ENCODE measurements at regions of chr11 and their contacts with region 1.

Region 1: GRCh38 chr11:34916015-34916842 is at the starts of genes APIP and PDHX:
- DNase-seq: peak; percentile 93
- ATAC-seq: peak; percentile 96
- H3K4me3 Mint-ChIP-seq: peak within 1 kb of the TSS; percentile 95
- H3K27ac Mint-ChIP-seq: peak within 1 kb of the TSS; percentile 91
- H3K4me1 Mint-ChIP-seq: peaks cover 27% of the 10 kb centered on the region
- H3K27me3 Mint-ChIP-seq: no peaks in the 10 kb centered on the region
- CTCF ChIP-seq: no peak
- total RNA-seq, gene APIP: 17.8 and 18.7 TPM in 2 replicates
- total RNA-seq, gene PDHX: 18.1 and 18.6 TPM in 2 replicates

Region 2: GRCh38 chr11:34105079-34105956 is 810.9 kb before region 1 on chr11 and contains the start of gene NAT10:
- CTCF ChIA-PET with region 1: no interaction called
- POLR2A ChIA-PET with region 1: interaction called, 6 read pairs
- intact Hi-C with region 1: loop called (anchors 1 kb)
- DNase-seq: peak; percentile 91
- ATAC-seq: peak; percentile 92
- H3K4me3 Mint-ChIP-seq: peak within 1 kb of the TSS; percentile 97
- H3K27ac Mint-ChIP-seq: peak within 1 kb of the TSS; percentile 98
- H3K4me1 Mint-ChIP-seq: peaks cover 41% of the 10 kb centered on the region
- H3K27me3 Mint-ChIP-seq: peaks cover 2% of the 10 kb centered on the region
- CTCF ChIP-seq: no peak
- total RNA-seq, gene NAT10: 107 and 120 TPM in 2 replicates

Region 3: GRCh38 chr11:34653826-34654490 is 262.3 kb before region 1 on chr11:
- CTCF ChIA-PET with region 1: no interaction called
- POLR2A ChIA-PET with region 1: no interaction called
- intact Hi-C with region 1: loop called (anchors 5 kb)
- DNase-seq: no peak
- ATAC-seq: peak; percentile 65
- H3K4me3 Mint-ChIP-seq: peak overlapping the region; percentile 56
- H3K27ac Mint-ChIP-seq: peak overlapping the region; percentile 80
- H3K4me1 Mint-ChIP-seq: peaks cover 54% of the 10 kb centered on the region
- H3K27me3 Mint-ChIP-seq: no peaks in the 10 kb centered on the region
- CTCF ChIP-seq: no peak

Region 4: GRCh38 chr11:34791780-34792542 is 124.3 kb before region 1 on chr11:
- CTCF ChIA-PET with region 1: no interaction called
- POLR2A ChIA-PET with region 1: no interaction called
- intact Hi-C with region 1: no loop called
- DNase-seq: no peak
- ATAC-seq: no peak
- H3K4me3 Mint-ChIP-seq: no peak overlapping the region
- H3K27ac Mint-ChIP-seq: no peak overlapping the region
- H3K4me1 Mint-ChIP-seq: no peaks in the 10 kb centered on the region
- H3K27me3 Mint-ChIP-seq: peaks cover 8% of the 10 kb centered on the region
- CTCF ChIP-seq: no peak

Region 5: DNA sequence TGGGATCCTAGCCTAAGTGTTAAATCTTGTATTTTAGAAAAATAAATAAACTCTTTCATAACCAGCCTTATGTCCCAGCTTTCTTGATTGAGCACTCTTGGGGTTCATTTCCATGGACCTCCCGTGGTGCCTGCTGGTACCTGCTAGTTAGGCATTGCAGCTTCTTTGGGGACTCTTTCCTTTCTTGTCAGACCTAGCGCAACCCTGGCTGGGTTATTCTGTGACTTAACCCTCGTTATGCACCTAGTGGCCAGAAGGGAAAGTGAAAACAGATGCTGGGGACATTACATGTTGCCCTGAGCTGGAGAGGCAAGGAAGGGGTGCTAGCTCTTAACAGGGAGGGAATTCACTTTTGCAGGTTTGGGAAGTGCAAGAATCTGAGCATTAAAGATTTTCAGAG is 46.8 kb before region 1 on chr11:
- CTCF ChIA-PET with region 1: no interaction called
- POLR2A ChIA-PET with region 1: no interaction called
- intact Hi-C with region 1: no loop called
- DNase-seq: no peak
- ATAC-seq: no peak
- H3K4me3 Mint-ChIP-seq: no peak overlapping the region
- H3K27ac Mint-ChIP-seq: no peak overlapping the region
- H3K4me1 Mint-ChIP-seq: peaks cover 1% of the 10 kb centered on the region
- H3K27me3 Mint-ChIP-seq: no peaks in the 10 kb centered on the region
- CTCF ChIP-seq: no peak

Region 6: GRCh38 chr11:35165423-35166368 is 249.5 kb after region 1 on chr11:
- CTCF ChIA-PET with region 1: no interaction called
- POLR2A ChIA-PET with region 1: no interaction called
- intact Hi-C with region 1: loop called (anchors 2 kb)
- DNase-seq: peak; percentile 55
- ATAC-seq: peak; percentile 68
- H3K4me3 Mint-ChIP-seq: peak overlapping the region; percentile 76
- H3K27ac Mint-ChIP-seq: peak overlapping the region; percentile 91
- H3K4me1 Mint-ChIP-seq: peaks cover 100% of the 10 kb centered on the region
- H3K27me3 Mint-ChIP-seq: no peaks in the 10 kb centered on the region
- CTCF ChIP-seq: no peak

Region 7: DNA sequence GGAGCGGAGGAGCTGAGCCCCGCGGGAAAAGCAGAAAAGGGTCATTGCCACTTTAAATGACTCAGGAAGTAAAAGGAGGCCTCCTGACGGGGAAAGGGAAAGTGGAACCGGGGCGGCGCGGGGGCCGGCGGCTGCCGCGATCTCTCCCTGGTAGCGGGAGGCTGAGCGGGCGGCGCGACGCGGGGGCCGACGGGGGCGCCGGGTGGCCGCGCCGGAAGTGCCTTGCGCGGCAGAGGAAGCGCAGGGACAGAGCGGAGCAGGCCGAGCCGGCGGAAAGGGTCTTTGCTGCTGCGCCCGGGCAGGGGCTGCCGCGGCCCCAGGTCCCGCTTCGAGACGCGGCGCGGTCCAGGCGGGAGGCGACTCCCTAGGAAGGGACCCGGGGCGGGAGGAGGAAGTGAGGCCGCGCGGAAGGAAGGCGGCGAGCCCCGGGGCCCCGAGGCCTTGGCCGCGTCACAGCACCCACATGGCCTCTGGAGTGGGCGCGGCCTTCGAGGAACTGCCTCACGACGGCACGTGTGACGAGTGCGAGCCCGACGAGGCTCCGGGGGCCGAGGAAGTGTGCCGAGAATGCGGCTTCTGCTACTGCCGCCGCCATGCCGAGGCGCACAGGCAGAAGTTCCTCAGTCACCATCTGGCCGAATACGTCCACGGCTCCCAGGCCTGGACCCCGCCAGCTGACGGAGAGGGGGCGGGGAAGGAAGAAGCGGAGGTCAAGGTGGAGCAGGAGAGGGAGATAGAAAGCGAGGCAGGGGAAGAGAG is 746.6 kb after region 1 on chr11 and contains the start of gene TRIM44:
- CTCF ChIA-PET with region 1: no interaction called
- POLR2A ChIA-PET with region 1: no interaction called
- intact Hi-C with region 1: loop called (anchors 1 kb)
- DNase-seq: peak; percentile 77
- ATAC-seq: peak; percentile 82
- H3K4me3 Mint-ChIP-seq: peak within 1 kb of the TSS; percentile 98
- H3K27ac Mint-ChIP-seq: peak within 1 kb of the TSS; percentile 98
- H3K4me1 Mint-ChIP-seq: peaks cover 50% of the 10 kb centered on the region
- H3K27me3 Mint-ChIP-seq: peaks cover 3% of the 10 kb centered on the region
- CTCF ChIP-seq: no peak
- total RNA-seq, gene TRIM44: 66.7 and 67.0 TPM in 2 replicates

Measured in activated B cell treated with CpG ODN at 0.5 μM for 24 hours (primary cell).